AG04450 (cell line): ENCODE measurements at regions of chr1 and their contacts with region 1.

Region 1: GRCh38 chr1:101357444-101357986 is 120.7 kb downstream of the S1PR1 start:
- DNase-seq: peak; percentile 58
- H3K4me3 ChIP-seq: no peak overlapping the region
- H3K27ac ChIP-seq: no peak overlapping the region
- H3K27me3 ChIP-seq: no peaks in the 10 kb centered on the region
- CTCF ChIP-seq: peak; percentile 92

Region 2: DNA sequence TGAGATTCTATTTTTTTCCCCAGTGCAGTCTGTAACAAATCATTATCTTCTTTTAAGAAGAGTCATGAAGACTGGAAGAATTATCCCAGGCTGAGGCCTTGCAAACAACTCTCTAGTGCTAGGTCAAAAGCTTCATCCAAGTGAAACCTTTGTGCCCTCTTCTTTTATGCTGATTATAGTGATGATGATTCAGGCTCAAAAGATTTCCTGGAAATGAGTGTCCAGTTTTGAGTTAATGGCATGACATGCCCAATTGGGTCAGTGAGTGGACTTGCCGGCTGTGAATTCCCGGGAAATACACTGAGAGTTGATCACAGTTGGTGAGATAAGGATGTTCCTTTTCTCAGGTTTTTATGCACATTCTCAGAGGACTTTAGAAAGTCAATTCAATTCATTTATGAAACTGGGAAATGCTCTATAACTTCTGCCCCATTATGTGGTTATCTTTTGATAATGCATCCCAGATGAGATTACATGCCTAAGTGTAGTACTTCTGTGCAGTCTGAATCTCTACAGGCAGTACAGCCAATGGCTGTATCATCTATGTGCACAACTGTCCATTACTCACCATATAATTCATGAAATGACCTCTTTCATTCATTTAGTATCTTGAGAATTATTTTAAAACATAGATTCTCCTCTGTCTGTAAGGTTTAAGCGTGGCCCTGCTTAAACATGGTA is 54.5 kb before region 1 on chr1:
- CTCF ChIA-PET with region 1: interaction called, 16 read pairs
- POLR2A ChIA-PET with region 1: no interaction called
- DNase-seq: no peak
- H3K4me3 ChIP-seq: no peak overlapping the region
- H3K27ac ChIP-seq: no peak overlapping the region
- H3K27me3 ChIP-seq: peaks cover 11% of the 10 kb centered on the region
- CTCF ChIP-seq: no peak

Region 3: GRCh38 chr1:101344745-101345144 is 12.8 kb before region 1 on chr1:
- CTCF ChIA-PET with region 1: interaction called, 21 read pairs
- POLR2A ChIA-PET with region 1: no interaction called
- DNase-seq: no peak
- H3K4me3 ChIP-seq: no peak overlapping the region
- H3K27ac ChIP-seq: no peak overlapping the region
- H3K27me3 ChIP-seq: no peaks in the 10 kb centered on the region
- CTCF ChIP-seq: no peak

Region 4: DNA sequence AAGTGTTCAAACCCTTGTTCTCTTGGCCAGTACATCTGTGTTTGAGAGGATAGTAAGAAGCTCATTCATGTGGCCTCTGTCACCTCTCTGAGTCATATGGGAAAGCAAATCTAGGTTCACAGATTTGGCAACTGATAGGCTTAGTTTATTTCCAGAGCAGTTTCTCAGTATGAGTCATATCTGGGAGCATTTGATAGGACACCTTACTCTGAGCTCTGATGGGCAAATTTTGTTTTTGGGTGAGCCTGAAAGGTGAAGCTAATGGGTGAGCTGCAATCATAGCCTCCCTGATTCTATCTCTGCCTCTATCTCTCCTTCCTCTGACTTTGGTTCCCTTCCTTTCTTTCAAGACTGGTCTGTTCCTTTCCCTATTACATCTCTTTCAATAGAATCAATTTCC is 13.7 kb after region 1 on chr1:
- CTCF ChIA-PET with region 1: interaction called, 28 read pairs
- POLR2A ChIA-PET with region 1: interaction called, 4 read pairs
- DNase-seq: peak; percentile 34
- H3K4me3 ChIP-seq: no peak overlapping the region
- H3K27ac ChIP-seq: no peak overlapping the region
- H3K27me3 ChIP-seq: peaks cover 4% of the 10 kb centered on the region
- CTCF ChIP-seq: no peak

Region 5: GRCh38 chr1:101484689-101485338 is 127.3 kb after region 1 on chr1:
- CTCF ChIA-PET with region 1: no interaction called
- POLR2A ChIA-PET with region 1: no interaction called
- DNase-seq: no peak
- H3K4me3 ChIP-seq: no peak overlapping the region
- H3K27ac ChIP-seq: no peak overlapping the region
- H3K27me3 ChIP-seq: no peaks in the 10 kb centered on the region
- CTCF ChIP-seq: no peak